Vagina (tissue), 2 donors: ENCODE measurements at regions of chr12 and their contacts with region 1.

Region 1: GRCh38 chr12:82758749-82759330 is 72.1 kb downstream of the TMTC2 start:
- DNase-seq: no peak
- H3K4me3 ChIP-seq: no peak overlapping the region
- H3K27ac ChIP-seq: no peak overlapping the region
- H3K4me1 ChIP-seq: peaks cover 14% of the 10 kb centered on the region
- H3K27me3 ChIP-seq: no peaks in the 10 kb centered on the region
- CTCF ChIP-seq: no peak
- POLR2A ChIP-seq: no peak

Region 2: DNA sequence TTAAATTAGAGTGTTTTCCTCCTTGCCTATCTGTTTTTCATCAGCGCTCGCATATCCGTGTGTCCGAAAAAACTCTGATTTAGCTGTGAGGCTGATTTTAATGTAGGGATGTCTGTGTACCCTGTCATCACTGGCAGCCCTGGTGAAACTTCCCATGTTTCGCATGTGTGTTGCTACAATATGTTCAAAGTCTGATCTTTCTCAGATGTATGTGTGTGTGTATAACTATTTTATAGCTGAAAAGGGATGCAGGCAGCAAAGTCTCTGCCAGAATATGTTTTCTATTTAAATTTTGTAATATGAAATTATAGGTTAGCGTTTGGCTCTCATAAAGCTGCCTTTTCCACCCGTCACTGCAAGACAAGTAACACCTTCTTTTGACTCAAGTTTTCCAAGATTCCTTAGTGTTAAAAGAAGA is 82.7 kb after region 1 on chr12:
- intact Hi-C with region 1: loop called (anchors 2 kb)
- DNase-seq: no peak
- H3K4me3 ChIP-seq: peak overlapping the region in 1 of 2 donors; percentile 7
- H3K27ac ChIP-seq: no peak overlapping the region
- H3K4me1 ChIP-seq: no peaks in the 10 kb centered on the region
- H3K27me3 ChIP-seq: no peaks in the 10 kb centered on the region
- CTCF ChIP-seq: no peak
- POLR2A ChIP-seq: no peak